ENCODE measurements at regions of chr7 and their contacts with region 1.

Region 1: DNA sequence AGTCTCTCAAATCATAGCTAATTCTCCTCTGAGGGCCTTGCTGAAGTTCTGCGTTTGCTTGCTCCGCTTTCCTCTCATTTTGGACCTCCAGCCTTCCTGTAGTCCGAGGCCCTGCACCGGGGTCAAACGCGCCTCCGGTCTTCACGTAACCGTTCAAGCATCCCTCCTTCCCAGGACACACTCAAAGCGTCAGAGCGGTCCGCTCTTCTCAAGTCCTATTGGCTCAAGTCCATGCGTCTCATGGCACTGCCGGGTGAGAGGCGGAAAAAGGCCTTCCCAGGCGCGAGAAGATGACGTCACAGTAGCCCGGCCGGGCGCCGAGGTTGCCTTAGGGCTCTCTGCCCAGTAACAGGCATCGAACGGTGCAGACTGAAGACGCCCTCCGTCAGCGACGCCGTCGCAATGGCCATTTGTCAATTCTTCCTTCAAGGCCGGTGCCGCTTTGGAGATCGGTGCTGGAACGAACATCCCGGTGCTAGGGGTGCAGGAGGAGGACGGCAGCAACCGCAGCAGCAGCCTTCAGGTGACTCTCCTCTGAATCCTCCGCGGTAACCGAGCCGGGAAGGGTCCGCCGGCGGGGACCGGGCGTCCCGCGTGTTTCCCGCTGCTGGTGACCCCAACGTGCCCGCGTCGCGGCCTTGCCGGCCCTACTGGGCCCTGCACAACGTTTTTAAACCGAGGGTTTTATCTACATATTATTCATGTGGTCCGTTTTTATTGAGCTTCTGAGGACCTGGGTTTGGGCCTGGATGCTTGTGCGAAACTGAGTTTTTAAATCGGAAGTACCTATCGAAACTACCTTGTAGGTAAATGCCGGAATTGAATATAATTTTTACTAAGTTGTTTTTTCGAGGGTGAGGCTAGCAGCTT is at the start of gene NUP42:
- DNase-seq: peak; percentile 92 to 96
- ATAC-seq: peak; percentile 94 to 99 (median 97)
- H3K4me3 ChIP-seq: peak within 1 kb of the TSS; percentile 56 to 87 (median 76)
- H3K27ac ChIP-seq: peak within 1 kb of the TSS; percentile 59 to 94 (median 91)
- H3K4me1 ChIP-seq: peaks cover 0 to 49% (median 31%) of the 10 kb centered on the region in 9 donors
- H3K27me3 ChIP-seq: no peaks in the 10 kb centered on the region
- CTCF ChIP-seq: no peak
- total RNA-seq, gene NUP42: 14.7 to 25.1 (median 19.7) TPM

Region 2: DNA sequence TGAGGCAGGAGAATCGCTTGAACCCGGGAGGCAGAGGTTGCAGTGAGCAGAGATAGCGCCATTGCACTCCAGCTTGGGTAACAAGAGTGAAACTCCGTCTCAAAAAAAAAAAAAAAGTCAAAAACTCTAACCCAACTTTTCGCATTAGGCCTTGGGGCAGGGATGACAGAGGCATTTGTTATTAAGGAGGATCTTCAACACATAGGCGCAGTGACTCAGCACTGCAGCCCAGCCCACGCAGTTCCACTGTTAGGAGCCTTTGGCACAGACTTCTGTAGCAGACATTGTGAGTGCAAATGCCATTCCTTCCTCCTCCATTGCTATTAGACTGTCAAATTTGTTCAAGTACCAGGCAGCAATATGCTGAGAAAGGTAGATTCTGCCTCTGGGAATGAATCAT is 119.5 kb before region 1 on chr7:
- intact Hi-C with region 1: no loop called
- DNase-seq: no peak
- ATAC-seq: peak in 1 of 8 donors; percentile 41
- H3K4me3 ChIP-seq: no peak overlapping the region
- H3K27ac ChIP-seq: no peak overlapping the region
- H3K4me1 ChIP-seq: peaks cover 0 to 18% (median 0%) of the 10 kb centered on the region in 9 donors
- H3K27me3 ChIP-seq: no peaks in the 10 kb centered on the region
- CTCF ChIP-seq: no peak

Region 3: GRCh38 chr7:23261843-23262452 is 80.0 kb after region 1 on chr7:
- intact Hi-C with region 1: loop called in 3 of 10 experiments (anchors 5 to 10 kb)
- DNase-seq: peak; percentile 32 to 45
- ATAC-seq: peak; percentile 65 to 82 (median 74)
- H3K4me3 ChIP-seq: no peak overlapping the region
- H3K27ac ChIP-seq: no peak overlapping the region
- H3K4me1 ChIP-seq: no peaks in the 10 kb centered on the region
- H3K27me3 ChIP-seq: peaks cover 0 to 3% (median 0%) of the 10 kb centered on the region in 7 donors
- CTCF ChIP-seq: peak; percentile 49 to 91 (median 80)

Region 4: GRCh38 chr7:23531794-23532489 is 350.0 kb after region 1 on chr7 and contains the start of gene TRA2A:
- intact Hi-C with region 1: loop called in 1 of 10 experiments (anchors 5 kb)
- DNase-seq: peak; percentile 97 to 98
- ATAC-seq: peak; percentile 99
- H3K4me3 ChIP-seq: peak within 1 kb of the TSS; percentile 60 to 98 (median 87)
- H3K27ac ChIP-seq: peak within 1 kb of the TSS; percentile 81 to 98 (median 96)
- H3K4me1 ChIP-seq: peaks cover 0 to 41% (median 37%) of the 10 kb centered on the region in 9 donors
- H3K27me3 ChIP-seq: no peaks in the 10 kb centered on the region
- CTCF ChIP-seq: no peak
- total RNA-seq, gene TRA2A: 26.9 to 38.3 (median 31.2) TPM